ENCODE measurements at regions of chr11 and their contacts with region 1.

Region 1: GRCh38 chr11:14907411-14908213 is 15.6 kb upstream of the CYP2R1 start:
- DNase-seq: peak; percentile 89
- H3K4me3 Mint-ChIP-seq: no peak overlapping the region
- H3K27ac Mint-ChIP-seq: peak overlapping the region; percentile 56
- H3K4me1 Mint-ChIP-seq: peaks cover 49% of the 10 kb centered on the region
- H3K27me3 Mint-ChIP-seq: no peaks in the 10 kb centered on the region

Region 2: DNA sequence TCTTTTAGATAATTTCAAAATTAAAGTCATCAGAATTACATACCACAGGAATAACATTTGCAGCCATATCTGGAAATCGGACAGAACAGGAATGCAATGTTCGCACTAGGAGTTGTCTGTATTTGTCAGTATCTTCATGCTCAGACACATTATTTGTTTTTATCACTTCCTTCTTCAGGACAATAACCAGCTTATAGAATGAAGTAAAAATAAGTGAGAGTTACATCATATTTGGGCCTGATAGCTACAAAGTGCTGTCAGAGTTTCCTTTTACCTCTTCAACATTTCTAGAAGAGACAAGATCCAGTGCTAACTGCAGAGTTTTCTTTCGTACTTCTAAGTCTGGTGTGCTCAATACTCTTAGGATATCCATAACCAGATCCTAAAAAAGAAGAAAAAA is 426.9 kb before region 1 on chr11:
- CTCF ChIA-PET with region 1: interaction called, 14 read pairs
- POLR2A ChIA-PET with region 1: no interaction called
- DNase-seq: no peak
- H3K4me3 Mint-ChIP-seq: no peak overlapping the region
- H3K27ac Mint-ChIP-seq: peak overlapping the region; percentile 26
- H3K4me1 Mint-ChIP-seq: peaks cover 12% of the 10 kb centered on the region
- H3K27me3 Mint-ChIP-seq: no peaks in the 10 kb centered on the region

Region 3: GRCh38 chr11:14537134-14537599 is 370.4 kb before region 1 on chr11:
- CTCF ChIA-PET with region 1: interaction called, 96 read pairs
- POLR2A ChIA-PET with region 1: no interaction called
- DNase-seq: peak; percentile 48
- H3K4me3 Mint-ChIP-seq: peak overlapping the region; percentile 58
- H3K27ac Mint-ChIP-seq: peak overlapping the region; percentile 47
- H3K4me1 Mint-ChIP-seq: peaks cover 22% of the 10 kb centered on the region
- H3K27me3 Mint-ChIP-seq: no peaks in the 10 kb centered on the region

Region 4: DNA sequence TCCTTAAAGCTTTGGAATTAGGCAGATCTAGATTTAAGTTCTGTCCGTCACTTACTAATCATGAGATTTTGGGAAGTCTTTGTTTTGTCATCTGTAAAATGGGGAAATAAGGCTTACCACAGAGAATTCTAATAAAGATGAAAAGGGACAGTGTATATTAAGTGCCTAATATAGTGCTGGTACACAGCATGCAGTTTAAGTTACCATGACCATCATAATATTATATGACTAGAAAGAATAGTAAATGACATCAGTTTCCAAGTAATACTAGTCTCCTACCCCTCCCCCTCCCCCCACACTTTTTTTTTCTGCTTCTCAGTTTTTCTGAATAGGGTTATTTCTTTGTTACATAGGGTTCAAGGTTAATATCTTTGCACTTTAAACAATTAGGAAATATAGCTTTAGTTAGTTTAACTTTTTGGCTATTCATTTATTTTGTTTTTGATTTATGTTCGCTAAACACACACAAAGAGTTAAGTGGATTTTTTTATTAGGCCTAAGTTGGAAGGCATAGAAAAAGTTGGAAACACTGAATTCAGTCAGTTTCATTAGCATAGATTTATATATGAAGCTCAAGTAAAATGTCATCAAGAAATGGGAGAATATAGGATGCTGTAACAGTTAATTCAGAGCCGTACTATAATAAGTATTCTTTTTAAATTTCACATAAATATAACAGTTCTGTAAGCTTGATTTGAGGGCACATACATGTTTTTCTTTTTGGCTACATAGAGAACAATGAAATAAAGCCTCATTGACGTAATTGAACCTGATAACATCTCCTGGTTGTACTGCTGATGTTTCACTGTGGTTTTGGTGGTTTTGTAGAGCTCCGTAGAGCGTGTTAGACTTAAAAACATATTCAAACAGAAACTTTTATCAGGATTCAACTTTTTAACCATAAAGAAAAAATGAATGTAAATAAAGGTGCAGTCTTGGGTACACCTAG is 142.8 kb before region 1 on chr11:
- CTCF ChIA-PET with region 1: interaction called, 22 read pairs
- POLR2A ChIA-PET with region 1: interaction called, 3 read pairs
- DNase-seq: peak; percentile 47
- H3K4me3 Mint-ChIP-seq: peak overlapping the region; percentile 52
- H3K27ac Mint-ChIP-seq: no peak overlapping the region
- H3K4me1 Mint-ChIP-seq: peaks cover 34% of the 10 kb centered on the region
- H3K27me3 Mint-ChIP-seq: no peaks in the 10 kb centered on the region

Region 5: GRCh38 chr11:14882196-14882595 is 25.4 kb before region 1 on chr11:
- CTCF ChIA-PET with region 1: interaction called, 201 read pairs
- POLR2A ChIA-PET with region 1: no interaction called
- DNase-seq: no peak
- H3K4me3 Mint-ChIP-seq: no peak overlapping the region
- H3K27ac Mint-ChIP-seq: no peak overlapping the region
- H3K4me1 Mint-ChIP-seq: peaks cover 6% of the 10 kb centered on the region
- H3K27me3 Mint-ChIP-seq: no peaks in the 10 kb centered on the region

Region 6: DNA sequence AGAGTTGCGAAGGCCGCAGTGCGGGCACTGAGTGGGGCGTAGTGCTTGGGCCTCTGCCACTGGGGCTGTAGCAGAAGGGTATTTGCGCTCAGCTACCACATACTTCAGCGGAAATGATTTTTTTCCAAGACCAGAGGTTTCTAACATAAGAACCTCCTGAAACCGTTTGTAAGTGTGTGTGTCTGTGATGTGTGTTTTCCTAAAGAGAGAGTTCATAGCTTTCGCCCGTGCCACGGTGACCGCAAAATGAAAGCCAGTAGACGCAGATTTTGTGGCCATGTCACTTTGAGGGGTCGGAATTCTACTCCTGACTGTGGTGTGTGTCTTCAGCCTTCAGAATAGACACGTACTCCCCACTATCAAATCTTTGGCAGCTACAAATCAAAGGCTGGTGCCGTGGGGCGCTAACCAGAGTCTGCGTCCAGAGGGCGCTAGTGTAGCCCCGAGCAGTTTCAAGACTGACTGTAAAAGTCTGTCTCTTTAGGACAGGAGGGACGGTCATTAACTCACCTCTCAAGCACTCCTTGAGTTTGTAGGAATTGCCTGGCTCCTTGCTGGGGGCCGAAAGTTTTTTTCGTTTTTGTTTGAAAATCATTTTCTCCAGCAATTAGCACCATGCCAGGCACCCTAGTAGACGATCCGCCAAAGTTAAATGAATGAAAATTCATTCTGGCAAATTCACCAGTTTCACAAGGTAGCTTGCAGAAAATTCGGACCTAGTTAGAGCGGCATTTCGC is 67.1 kb after region 1 on chr11:
- CTCF ChIA-PET with region 1: interaction called, 34 read pairs
- POLR2A ChIA-PET with region 1: interaction called, 6 read pairs
- DNase-seq: peak; percentile 68
- H3K4me3 Mint-ChIP-seq: peak overlapping the region; percentile 16
- H3K27ac Mint-ChIP-seq: no peak overlapping the region
- H3K4me1 Mint-ChIP-seq: peaks cover 30% of the 10 kb centered on the region
- H3K27me3 Mint-ChIP-seq: peaks cover 77% of the 10 kb centered on the region

Region 7: GRCh38 chr11:15208378-15209222 is 301.0 kb after region 1 on chr11:
- CTCF ChIA-PET with region 1: interaction called, 17 read pairs
- POLR2A ChIA-PET with region 1: no interaction called
- DNase-seq: peak; percentile 78
- H3K4me3 Mint-ChIP-seq: no peak overlapping the region
- H3K27ac Mint-ChIP-seq: no peak overlapping the region
- H3K4me1 Mint-ChIP-seq: no peaks in the 10 kb centered on the region
- H3K27me3 Mint-ChIP-seq: peaks cover 7% of the 10 kb centered on the region

Measured in activated CD4-positive, alpha-beta memory T cell treated with anti-CD3 and anti-CD28 coated beads, Interleukin-2, amount 10 ng/mL, durations not matched to agents 7 days and 5 days (primary cell).